ENCODE measurements at regions of chr9 and their contacts with region 1.

Region 1: DNA sequence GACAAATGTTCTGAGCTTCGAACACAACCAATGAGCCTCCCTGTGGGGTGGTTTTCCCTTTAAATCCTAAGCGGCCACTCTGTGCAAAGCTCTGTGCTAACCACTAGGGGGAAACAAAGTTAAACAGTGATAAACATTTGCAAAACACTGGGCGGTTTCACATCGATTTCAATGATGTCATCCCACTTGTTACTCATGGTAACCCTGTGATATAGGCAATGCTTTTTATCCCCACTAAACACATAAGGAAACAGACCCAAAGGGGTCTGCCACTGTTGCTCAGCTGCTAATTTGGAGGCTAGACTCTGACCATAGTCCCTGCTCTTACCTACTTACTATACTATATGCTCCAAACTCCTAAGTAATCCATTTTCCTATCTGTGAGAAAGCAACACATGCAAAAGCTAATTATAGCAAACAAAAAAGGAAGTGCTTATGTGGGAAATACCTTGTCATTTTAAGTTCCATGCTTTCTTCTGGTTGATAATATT is 57.3 kb downstream of the PTPN3 start:
- DNase-seq: no peak
- H3K4me3 ChIP-seq: no peak overlapping the region
- H3K27ac ChIP-seq: peak overlapping the region in 1 of 4 donors; percentile 55
- H3K4me1 ChIP-seq: peaks cover 0 to 24% (median 8%) of the 10 kb centered on the region in 3 donors
- H3K27me3 ChIP-seq: peaks cover 0 to 9% (median 0%) of the 10 kb centered on the region in 4 donors
- CTCF ChIP-seq: peak; percentile 42 to 90 (median 82)
- POLR2A ChIP-seq: no peak

Region 2: DNA sequence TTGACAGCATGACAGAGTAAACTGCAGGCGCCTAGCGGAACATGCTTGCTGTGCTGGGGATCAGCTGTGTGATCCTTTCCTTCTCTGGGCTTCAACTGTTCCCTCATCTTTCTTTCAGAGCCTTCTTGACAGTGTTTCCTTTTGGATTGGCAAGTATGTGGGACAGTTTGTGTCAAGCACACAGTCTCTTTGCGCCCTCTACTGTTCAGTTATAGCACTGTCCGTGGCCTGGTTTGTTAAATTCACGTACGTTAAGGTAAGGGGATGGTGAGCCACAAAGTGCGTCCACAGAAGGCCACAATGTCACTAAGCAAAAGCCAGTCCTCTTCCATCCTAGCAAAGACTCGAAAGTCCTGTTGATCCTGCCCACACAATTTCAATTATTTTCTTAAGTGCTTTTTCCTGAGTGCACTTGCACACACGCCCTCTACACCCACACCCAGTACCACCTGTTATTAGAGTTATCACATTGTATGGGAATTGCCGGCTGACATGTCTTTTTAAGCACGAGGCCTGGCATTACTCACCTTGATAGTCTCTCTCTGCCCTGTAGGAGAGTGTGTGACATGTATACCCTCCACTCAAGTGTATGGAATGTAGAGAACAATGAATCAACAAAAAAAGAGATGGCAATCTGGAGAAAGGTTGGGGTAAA is 79.8 kb after region 1 on chr9:
- intact Hi-C with region 1: loop called (anchors 10 kb)
- DNase-seq: no peak
- H3K4me3 ChIP-seq: no peak overlapping the region
- H3K27ac ChIP-seq: no peak overlapping the region
- H3K4me1 ChIP-seq: peaks cover 0 to 21% (median 9%) of the 10 kb centered on the region in 3 donors
- H3K27me3 ChIP-seq: peaks cover 0 to 6% (median 0%) of the 10 kb centered on the region in 4 donors
- CTCF ChIP-seq: peak; percentile 58 to 93 (median 85)
- POLR2A ChIP-seq: no peak

Region 3: DNA sequence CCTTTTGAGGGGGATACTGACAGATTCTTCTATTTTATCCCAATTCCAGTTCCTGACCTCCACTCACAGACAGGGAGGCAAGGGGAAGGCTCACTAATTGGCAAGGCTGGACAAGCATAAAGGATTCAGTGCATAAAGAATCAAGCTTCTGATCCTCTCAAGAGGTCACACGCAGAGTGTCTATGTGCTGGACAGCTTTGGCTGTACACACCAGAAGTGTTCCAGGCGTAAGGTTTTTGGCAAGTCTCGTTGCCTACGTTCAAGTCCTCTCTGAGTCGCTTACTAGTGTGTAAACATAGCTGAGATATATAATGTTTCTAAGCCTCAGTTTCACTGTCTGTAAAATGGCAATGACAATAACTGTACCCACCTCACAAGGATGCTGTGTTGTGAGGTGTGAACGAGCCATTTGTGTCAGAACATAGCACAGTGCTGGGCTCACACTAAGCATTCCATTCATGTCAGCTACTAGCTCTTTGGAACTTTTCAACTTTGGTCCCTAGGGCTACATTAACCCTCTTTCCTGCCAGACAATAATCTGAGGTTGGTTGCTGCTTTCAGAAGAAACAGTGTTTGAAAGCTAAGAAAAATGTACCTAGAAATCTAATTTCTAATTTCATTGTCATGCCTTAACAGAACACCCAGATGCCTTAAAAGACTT is 391.3 kb after region 1 on chr9:
- intact Hi-C with region 1: no loop called
- DNase-seq: no peak
- H3K4me3 ChIP-seq: no peak overlapping the region
- H3K27ac ChIP-seq: no peak overlapping the region
- H3K4me1 ChIP-seq: no peaks in the 10 kb centered on the region
- H3K27me3 ChIP-seq: no peaks in the 10 kb centered on the region
- CTCF ChIP-seq: no peak
- POLR2A ChIP-seq: no peak